ENCODE measurements at regions of chr11 and their contacts with region 1.

Region 1: DNA sequence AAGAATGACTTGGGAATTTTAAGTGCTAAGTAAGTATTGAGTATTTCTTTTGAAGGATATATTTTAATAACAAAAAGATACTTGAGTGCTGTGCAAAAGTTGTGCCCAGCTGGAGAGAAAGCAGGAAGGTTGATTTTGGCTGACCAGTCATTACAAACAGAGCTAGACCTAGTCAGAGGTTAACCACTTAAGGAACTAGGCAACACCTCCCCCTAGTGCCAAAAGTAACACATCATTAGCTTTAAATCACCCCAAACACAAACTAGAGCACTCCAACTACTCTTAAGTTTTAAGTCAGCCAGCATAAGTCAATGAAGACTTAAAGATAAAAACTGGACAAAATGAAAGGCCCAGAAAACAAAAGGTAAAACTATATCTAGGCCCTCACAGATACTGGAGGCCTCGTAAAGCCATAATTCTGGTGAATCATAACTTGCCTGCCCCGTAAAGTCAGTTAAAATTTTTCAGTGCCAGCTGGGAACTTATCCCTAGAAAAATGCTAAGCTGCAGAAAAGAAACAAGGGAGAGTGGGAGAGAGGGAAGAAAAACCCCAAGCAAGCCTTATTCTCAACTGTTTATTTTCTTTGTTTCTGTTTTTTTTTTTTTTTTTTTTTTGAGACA is 4.6 kb downstream of the TMEM9B start:
- DNase-seq: peak; percentile 84
- H3K27ac ChIP-seq: no peak overlapping the region
- CTCF ChIP-seq: peak; percentile 77

Region 2: DNA sequence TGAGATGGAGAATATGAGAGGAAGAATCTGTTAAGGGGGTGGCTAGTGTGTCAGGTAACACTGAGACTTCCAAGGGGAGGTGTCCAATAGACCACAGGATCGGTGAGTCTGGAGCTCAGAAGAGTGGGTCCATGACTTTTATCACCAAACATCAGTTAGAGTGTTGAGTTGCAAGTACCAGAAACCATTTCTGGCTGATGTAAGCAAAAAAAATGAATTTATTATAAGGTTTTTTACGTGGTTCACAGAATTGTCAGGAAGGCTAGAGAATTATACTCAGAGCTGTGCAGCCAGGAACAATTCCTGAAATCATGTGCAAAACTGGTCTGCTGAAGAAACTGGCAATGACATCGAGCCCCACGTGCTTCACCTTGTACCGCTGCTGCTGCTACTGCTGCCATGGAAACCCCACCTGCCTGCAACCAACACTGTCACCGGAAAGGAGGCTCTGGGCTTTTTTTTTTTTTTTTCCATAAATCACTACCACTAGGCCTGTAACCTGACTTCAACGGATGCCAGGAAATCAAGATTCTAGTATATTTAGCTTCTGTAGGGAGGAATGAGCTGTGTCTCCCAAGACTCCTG is 349.0 kb before region 1 on chr11:
- CTCF ChIA-PET with region 1: no interaction called
- POLR2A ChIA-PET with region 1: no interaction called
- DNase-seq: no peak
- H3K27ac ChIP-seq: no peak overlapping the region
- CTCF ChIP-seq: no peak

Region 3: GRCh38 chr11:8913961-8914660 is 45.5 kb before region 1 on chr11:
- CTCF ChIA-PET with region 1: interaction called, 10 read pairs
- POLR2A ChIA-PET with region 1: interaction called, 5 read pairs
- DNase-seq: peak; percentile 42
- H3K27ac ChIP-seq: no peak overlapping the region
- CTCF ChIP-seq: peak; percentile 86

Measured in RWPE1 (cell line).